Left colon (tissue), 2 donors: ENCODE measurements at regions of chrX and their contacts with region 1.

Region 1: DNA sequence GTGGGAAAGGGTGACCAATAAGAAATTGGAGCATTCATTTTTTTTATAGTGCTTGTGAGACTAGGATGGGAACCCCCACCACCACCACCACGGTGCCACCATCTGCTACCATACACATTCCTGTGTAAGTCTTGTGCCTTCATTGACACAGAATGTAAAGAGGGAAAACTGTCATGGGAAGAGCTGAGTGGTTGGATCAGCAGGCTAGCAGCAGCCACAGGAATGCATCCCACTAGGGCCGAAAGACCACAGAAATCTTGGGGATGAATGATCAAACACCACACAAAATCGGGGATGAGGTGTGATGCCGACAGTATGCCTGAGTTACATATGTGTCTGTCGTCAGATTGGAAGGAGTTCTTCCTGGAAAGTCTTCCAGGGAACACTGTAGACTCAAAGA is 69.2 kb downstream of the SRPX start:
- DNase-seq: no peak
- ATAC-seq: no peak

Region 2: GRCh38 chrX:37926700-37927099 is 224.7 kb before region 1 on chrX:
- intact Hi-C with region 1: loop called in 1 of 2 experiments (anchors 10 kb)
- DNase-seq: no peak
- ATAC-seq: peak; percentile 81

Region 3: GRCh38 chrX:38183596-38183995 is 32.2 kb after region 1 on chrX:
- intact Hi-C with region 1: no loop called
- DNase-seq: no peak
- ATAC-seq: no peak